Sigmoid colon (tissue), 7 donors: ENCODE measurements at regions of chr3 and their contacts with region 1.

Region 1: GRCh38 chr3:129240436-129240835 is 9.0 kb upstream of the COPG1 start:
- DNase-seq: no peak
- H3K4me3 ChIP-seq: no peak overlapping the region
- H3K27ac ChIP-seq: no peak overlapping the region
- H3K4me1 ChIP-seq: peaks cover 0 to 10% (median 4%) of the 10 kb centered on the region in 4 donors
- H3K27me3 ChIP-seq: no peaks in the 10 kb centered on the region
- CTCF ChIP-seq: no peak
- EP300 ChIP-seq: no peak
- POLR2A ChIP-seq: no peak

Region 2: GRCh38 chr3:128698211-128699064 is 542.0 kb before region 1 on chr3:
- intact Hi-C with region 1: no loop called
- DNase-seq: peak; percentile 74
- H3K4me3 ChIP-seq: peak overlapping the region; percentile 48 to 70 (median 64)
- H3K27ac ChIP-seq: peak overlapping the region; percentile 83 to 89 (median 86)
- H3K4me1 ChIP-seq: peaks cover 0 to 4% (median 0%) of the 10 kb centered on the region in 4 donors
- H3K27me3 ChIP-seq: no peaks in the 10 kb centered on the region
- CTCF ChIP-seq: no peak
- EP300 ChIP-seq: no peak
- POLR2A ChIP-seq: peak in 1 of 2 donors; percentile 26

Region 3: GRCh38 chr3:129195731-129196256 is 44.6 kb before region 1 on chr3:
- intact Hi-C with region 1: loop called (anchors 5 kb)
- DNase-seq: peak; percentile 88
- H3K4me3 ChIP-seq: peak overlapping the region in 3 of 4 donors; percentile 16 to 22 (median 20)
- H3K27ac ChIP-seq: peak overlapping the region; percentile 73 to 88 (median 82)
- H3K4me1 ChIP-seq: peaks cover 0 to 31% (median 28%) of the 10 kb centered on the region in 4 donors
- H3K27me3 ChIP-seq: no peaks in the 10 kb centered on the region
- CTCF ChIP-seq: no peak
- EP300 ChIP-seq: peak in 2 of 4 donors; percentile 4 to 43
- POLR2A ChIP-seq: no peak

Region 4: GRCh38 chr3:129305592-129306091 is 65.2 kb after region 1 on chr3:
- intact Hi-C with region 1: no loop called
- DNase-seq: peak; percentile 96
- H3K4me3 ChIP-seq: peak overlapping the region; percentile 9 to 43 (median 34)
- H3K27ac ChIP-seq: peak overlapping the region; percentile 68 to 82 (median 74)
- H3K4me1 ChIP-seq: peaks cover 0 to 11% (median 3%) of the 10 kb centered on the region in 4 donors
- H3K27me3 ChIP-seq: no peaks in the 10 kb centered on the region
- CTCF ChIP-seq: no peak
- EP300 ChIP-seq: no peak
- POLR2A ChIP-seq: peak in 1 of 2 donors; percentile 19